Endothelial cell of umbilical vein (primary cell): ENCODE measurements at regions of chr1 and their contacts with region 1.

Region 1: DNA sequence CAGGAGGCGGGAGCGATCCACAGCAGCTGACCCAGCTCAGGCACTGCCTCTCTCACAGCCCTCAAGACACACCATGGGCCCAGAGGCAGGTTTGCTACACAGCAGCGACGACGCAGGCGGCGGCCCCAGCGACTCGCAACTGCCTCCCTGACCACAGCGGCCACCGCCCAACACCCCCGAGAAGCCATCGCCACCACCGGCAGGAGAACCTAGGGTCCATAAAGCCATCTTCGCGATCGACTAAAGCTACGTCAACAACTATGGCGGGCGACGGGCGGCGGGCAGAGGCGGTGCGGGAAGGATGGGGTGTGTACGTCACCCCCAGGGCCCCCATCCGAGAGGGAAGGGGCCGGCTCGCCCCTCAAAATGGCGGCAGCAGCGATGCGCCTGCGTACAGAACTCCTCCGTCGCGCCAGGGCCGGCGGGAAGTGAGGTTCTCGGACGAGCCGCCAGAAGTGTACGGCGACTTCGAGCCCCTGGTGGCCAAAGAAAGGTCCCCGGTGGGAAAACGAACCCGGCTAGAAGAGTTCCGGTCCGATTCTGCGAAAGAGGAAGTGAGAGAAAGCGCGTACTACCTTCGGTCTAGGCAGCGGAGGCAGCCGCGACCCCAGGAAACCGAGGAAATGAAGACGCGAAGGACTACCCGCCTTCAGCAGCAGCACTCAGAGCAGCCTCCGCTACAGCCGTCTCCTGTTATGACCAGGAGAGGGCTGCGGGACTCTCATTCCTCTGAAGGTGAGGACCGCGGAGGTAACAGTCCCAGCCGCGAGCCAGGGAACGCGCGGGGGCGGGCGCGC is at the start of gene TOR1AIP1:
- DNase-seq: peak; percentile 99
- H3K4me3 ChIP-seq: peak within 1 kb of the TSS; percentile 71 to 93 (median 76)
- H3K27ac ChIP-seq: peak within 1 kb of the TSS; percentile 91
- H3K4me1 ChIP-seq: peaks cover 15% of the 10 kb centered on the region
- H3K27me3 ChIP-seq: no peaks in the 10 kb centered on the region
- CTCF ChIP-seq: peak; percentile 11 to 45
- POLR2A ChIP-seq: peak; percentile 18
- total RNA-seq, gene TOR1AIP1: 28.8 and 30.2 TPM in 2 replicates

Region 2: DNA sequence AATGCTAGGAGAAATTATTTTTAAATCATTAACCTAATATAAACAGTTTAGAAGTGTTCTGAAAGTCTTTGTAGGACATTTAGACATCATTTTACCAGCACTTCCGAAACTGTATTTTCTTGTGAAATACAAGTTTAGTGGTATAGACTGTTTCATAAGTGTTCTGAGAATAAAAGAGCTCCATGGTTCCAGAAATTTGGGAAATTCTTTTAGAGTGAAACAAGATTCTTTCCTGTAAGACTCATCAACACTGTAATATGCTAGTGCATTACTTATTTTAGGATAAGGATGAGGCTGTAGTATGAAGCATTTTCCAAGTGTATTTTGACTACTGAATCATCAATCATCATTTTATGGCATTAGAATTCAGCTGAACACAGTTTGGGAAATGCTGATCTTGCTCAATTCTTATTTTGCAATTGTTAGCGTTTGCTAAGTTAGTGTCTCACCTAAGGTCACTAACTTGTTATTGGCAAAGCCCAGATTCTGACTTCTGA is 145.6 kb after region 1 on chr1:
- CTCF ChIA-PET with region 1: no interaction called
- POLR2A ChIA-PET with region 1: no interaction called
- dilution Hi-C with region 1: no loop called
- intact Hi-C with region 1: loop called (anchors 2 kb)
- DNase-seq: peak; percentile 26
- H3K4me3 ChIP-seq: no peak overlapping the region
- H3K27ac ChIP-seq: peak overlapping the region; percentile 4
- H3K4me1 ChIP-seq: peaks cover 25% of the 10 kb centered on the region
- H3K27me3 ChIP-seq: no peaks in the 10 kb centered on the region
- CTCF ChIP-seq: no peak
- POLR2A ChIP-seq: no peak

Region 3: DNA sequence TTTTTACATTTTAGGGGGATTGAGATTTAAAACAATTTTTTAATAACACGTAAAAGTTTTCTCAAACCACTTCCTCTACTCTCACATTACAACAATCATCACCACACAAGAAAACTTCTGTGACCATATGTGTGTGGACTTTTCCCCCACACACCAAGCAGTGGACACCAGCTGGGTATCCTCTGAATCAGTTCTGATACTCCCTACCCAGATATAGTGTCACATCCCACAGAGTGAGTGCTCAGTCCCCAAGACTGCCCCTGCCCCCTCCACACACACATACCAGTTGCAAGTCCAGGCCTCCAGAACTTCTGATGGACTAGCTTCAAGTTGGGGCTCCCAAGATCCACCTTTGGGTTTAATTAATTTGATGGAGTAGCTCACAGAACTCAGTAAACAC is 219.0 kb after region 1 on chr1:
- CTCF ChIA-PET with region 1: no interaction called
- POLR2A ChIA-PET with region 1: no interaction called
- dilution Hi-C with region 1: no loop called
- intact Hi-C with region 1: no loop called
- DNase-seq: no peak
- H3K4me3 ChIP-seq: no peak overlapping the region
- H3K27ac ChIP-seq: no peak overlapping the region
- H3K4me1 ChIP-seq: no peaks in the 10 kb centered on the region
- H3K27me3 ChIP-seq: no peaks in the 10 kb centered on the region
- CTCF ChIP-seq: no peak
- POLR2A ChIP-seq: no peak

Region 4: GRCh38 chr1:180154325-180155181 is 272.1 kb after region 1 on chr1 and contains the start of gene QSOX1:
- CTCF ChIA-PET with region 1: no interaction called
- POLR2A ChIA-PET with region 1: no interaction called
- dilution Hi-C with region 1: no loop called
- intact Hi-C with region 1: loop called (anchors 1 kb)
- DNase-seq: peak; percentile 82
- H3K4me3 ChIP-seq: peak within 1 kb of the TSS; percentile 54 to 90 (median 87)
- H3K27ac ChIP-seq: peak within 1 kb of the TSS; percentile 58
- H3K4me1 ChIP-seq: peaks cover 60% of the 10 kb centered on the region
- H3K27me3 ChIP-seq: no peaks in the 10 kb centered on the region
- CTCF ChIP-seq: no peak
- POLR2A ChIP-seq: peak; percentile 95
- total RNA-seq, gene QSOX1: 256 and 257 TPM in 2 replicates

Region 5: GRCh38 chr1:180178511-180179161 is 296.2 kb after region 1 on chr1:
- CTCF ChIA-PET with region 1: interaction called, 13 read pairs
- POLR2A ChIA-PET with region 1: no interaction called
- dilution Hi-C with region 1: no loop called
- intact Hi-C with region 1: no loop called
- DNase-seq: peak; percentile 64
- H3K4me3 ChIP-seq: no peak overlapping the region
- H3K27ac ChIP-seq: no peak overlapping the region
- H3K4me1 ChIP-seq: no peaks in the 10 kb centered on the region
- H3K27me3 ChIP-seq: no peaks in the 10 kb centered on the region
- CTCF ChIP-seq: peak; percentile 91 to 93
- POLR2A ChIP-seq: no peak

Region 6: DNA sequence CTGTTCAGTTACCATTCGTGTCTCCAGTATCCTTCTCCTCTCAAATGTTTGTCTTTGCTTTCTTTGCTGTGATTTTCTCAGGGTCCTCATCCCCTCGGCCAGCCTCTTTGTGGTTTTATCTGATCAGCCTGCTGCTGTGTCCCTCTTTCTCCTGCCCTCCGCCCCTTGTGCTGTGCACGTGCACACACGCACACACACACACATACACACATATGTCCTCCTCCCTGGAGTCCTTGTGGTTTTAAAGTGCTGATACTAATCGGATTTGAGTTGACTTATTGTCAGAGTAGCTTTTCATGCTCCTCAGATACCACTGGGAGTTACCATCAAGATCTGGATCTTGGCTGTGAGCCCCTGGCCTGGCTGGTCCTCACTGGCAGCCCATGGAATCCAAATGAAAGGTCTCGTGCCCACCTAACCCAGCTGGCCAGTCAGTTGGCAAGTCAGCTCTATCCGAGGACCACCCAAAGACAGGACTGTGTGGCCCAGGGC is 306.3 kb after region 1 on chr1:
- CTCF ChIA-PET with region 1: no interaction called
- POLR2A ChIA-PET with region 1: no interaction called
- dilution Hi-C with region 1: no loop called
- intact Hi-C with region 1: no loop called
- DNase-seq: no peak
- H3K4me3 ChIP-seq: no peak overlapping the region
- H3K27ac ChIP-seq: no peak overlapping the region
- H3K4me1 ChIP-seq: no peaks in the 10 kb centered on the region
- H3K27me3 ChIP-seq: no peaks in the 10 kb centered on the region
- CTCF ChIP-seq: no peak
- POLR2A ChIP-seq: no peak